Spleen (tissue), 13 donors: ENCODE measurements at regions of chr11 and their contacts with region 1.

Region 1: GRCh38 chr11:111926505-111927391 is 8.0 kb downstream of the C11orf52 start:
- DNase-seq: peak; percentile 99
- H3K4me3 ChIP-seq: peak overlapping the region; percentile 28 to 74 (median 44)
- H3K27ac ChIP-seq: peak overlapping the region; percentile 71 to 90 (median 80)
- H3K4me1 ChIP-seq: peaks cover 5 to 35% (median 16%) of the 10 kb centered on the region in 6 donors
- H3K27me3 ChIP-seq: no peaks in the 10 kb centered on the region
- CTCF ChIP-seq: peak in 3 of 11 experiments; percentile 9 to 47 (median 39)
- POLR2A ChIP-seq: no peak

Region 2: GRCh38 chr11:111693224-111693937 is 233.4 kb before region 1 on chr11:
- intact Hi-C with region 1: no loop called
- DNase-seq: no peak
- H3K4me3 ChIP-seq: no peak overlapping the region
- H3K27ac ChIP-seq: peak overlapping the region in 2 of 8 donors; percentile 22 to 46
- H3K4me1 ChIP-seq: peaks cover 0 to 21% (median 3%) of the 10 kb centered on the region in 6 donors
- H3K27me3 ChIP-seq: no peaks in the 10 kb centered on the region
- CTCF ChIP-seq: no peak
- POLR2A ChIP-seq: no peak

Region 3: GRCh38 chr11:111718436-111718835 is 208.3 kb before region 1 on chr11:
- intact Hi-C with region 1: no loop called
- DNase-seq: no peak
- H3K4me3 ChIP-seq: no peak overlapping the region
- H3K27ac ChIP-seq: no peak overlapping the region
- H3K4me1 ChIP-seq: peaks cover 0 to 11% (median 0%) of the 10 kb centered on the region in 6 donors
- H3K27me3 ChIP-seq: no peaks in the 10 kb centered on the region
- CTCF ChIP-seq: no peak
- POLR2A ChIP-seq: no peak

Region 4: GRCh38 chr11:111819161-111819828 is 107.5 kb before region 1 on chr11:
- intact Hi-C with region 1: no loop called
- DNase-seq: no peak
- H3K4me3 ChIP-seq: no peak overlapping the region
- H3K27ac ChIP-seq: peak overlapping the region; percentile 24 to 77 (median 68)
- H3K4me1 ChIP-seq: peaks cover 0 to 19% (median 9%) of the 10 kb centered on the region in 6 donors
- H3K27me3 ChIP-seq: no peaks in the 10 kb centered on the region
- CTCF ChIP-seq: no peak
- POLR2A ChIP-seq: no peak

Region 5: DNA sequence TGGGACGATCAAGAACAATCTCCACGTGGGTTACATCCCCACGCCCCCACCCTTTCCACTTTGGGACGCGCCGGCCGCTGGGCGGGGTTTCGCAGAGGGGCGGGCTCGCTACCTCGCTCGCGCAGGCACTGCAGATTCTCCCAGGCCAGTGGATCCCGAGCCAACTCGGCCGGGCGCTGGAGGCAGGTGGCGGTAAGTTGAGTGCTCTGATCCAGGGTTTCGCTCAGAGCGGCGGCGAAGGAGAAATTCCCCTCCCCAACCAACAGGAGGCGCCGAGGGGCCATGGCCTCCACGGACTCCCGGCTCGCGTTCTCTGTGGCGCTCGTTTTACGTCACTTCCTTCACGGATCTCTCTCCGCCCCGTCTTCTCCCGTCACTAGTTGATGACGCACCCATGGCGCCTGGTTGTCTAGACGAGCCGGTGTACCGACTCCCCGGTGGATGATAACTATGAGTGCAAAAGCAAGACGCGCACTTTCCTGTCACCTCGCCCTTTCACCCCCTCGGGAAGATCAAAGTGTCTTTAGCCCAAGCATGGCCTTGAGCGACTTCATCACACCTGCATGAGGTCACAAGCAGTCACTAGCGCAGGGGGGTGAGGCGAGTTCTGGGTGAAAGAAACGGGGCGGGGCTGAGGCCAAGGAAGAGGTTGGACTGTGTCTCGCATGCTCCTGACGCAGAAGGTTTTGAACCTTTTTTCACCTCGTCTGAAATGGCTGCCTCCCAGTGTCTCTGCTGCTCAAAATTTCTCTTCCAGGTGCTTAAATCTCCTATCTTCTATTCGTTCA is 47.7 kb before region 1 on chr11 and contains the starts of genes CFAP68 and FDXACB1:
- intact Hi-C with region 1: loop called (anchors 2 kb)
- DNase-seq: peak; percentile 99
- H3K4me3 ChIP-seq: peak within 1 kb of the TSS; percentile 32 to 82 (median 68)
- H3K27ac ChIP-seq: peak within 1 kb of the TSS; percentile 93 to 97 (median 96)
- H3K4me1 ChIP-seq: peaks cover 8 to 30% (median 17%) of the 10 kb centered on the region in 6 donors
- H3K27me3 ChIP-seq: no peaks in the 10 kb centered on the region
- CTCF ChIP-seq: peak; percentile 78 to 97 (median 94)
- POLR2A ChIP-seq: peak in 2 of 3 donors; percentile 25 to 63
- total RNA-seq, gene CFAP68: 9.4 to 15.3 (median 12.4) TPM
- total RNA-seq, gene FDXACB1: 1.9 to 4.0 (median 3.6) TPM

Region 6: GRCh38 chr11:112999520-112999919 is 1072.8 kb after region 1 on chr11:
- intact Hi-C with region 1: no loop called
- DNase-seq: no peak
- H3K4me3 ChIP-seq: no peak overlapping the region
- H3K27ac ChIP-seq: no peak overlapping the region
- H3K4me1 ChIP-seq: peaks cover 0 to 4% (median 0%) of the 10 kb centered on the region in 6 donors
- H3K27me3 ChIP-seq: peaks cover 0 to 4% (median 0%) of the 10 kb centered on the region in 7 donors
- CTCF ChIP-seq: no peak
- POLR2A ChIP-seq: no peak